Upper lobe of right lung (tissue), 1 donor: ENCODE measurements at regions of chr7 and their contacts with region 1.

Region 1: GRCh38 chr7:2941216-2941859 is 97.2 kb upstream of the GNA12 start:
- DNase-seq: peak; percentile 33
- ATAC-seq: peak; percentile 49
- H3K4me3 ChIP-seq: no peak overlapping the region
- H3K27ac ChIP-seq: no peak overlapping the region
- H3K4me1 ChIP-seq: no peaks in the 10 kb centered on the region
- H3K27me3 ChIP-seq: no peaks in the 10 kb centered on the region
- CTCF ChIP-seq: no peak

Region 2: GRCh38 chr7:2403014-2403717 is 538.2 kb before region 1 on chr7 and contains the start of gene CHST12:
- intact Hi-C with region 1: loop called (anchors 10 kb)
- DNase-seq: peak; percentile 97
- ATAC-seq: peak; percentile 95
- H3K4me3 ChIP-seq: peak within 1 kb of the TSS; percentile 89
- H3K27ac ChIP-seq: peak within 1 kb of the TSS; percentile 81
- H3K4me1 ChIP-seq: peaks cover 54% of the 10 kb centered on the region
- H3K27me3 ChIP-seq: no peaks in the 10 kb centered on the region
- CTCF ChIP-seq: no peak
- total RNA-seq, gene CHST12: 29.8 TPM